ENCODE measurements at regions of chr5 and their contacts with region 1.

Region 1: DNA sequence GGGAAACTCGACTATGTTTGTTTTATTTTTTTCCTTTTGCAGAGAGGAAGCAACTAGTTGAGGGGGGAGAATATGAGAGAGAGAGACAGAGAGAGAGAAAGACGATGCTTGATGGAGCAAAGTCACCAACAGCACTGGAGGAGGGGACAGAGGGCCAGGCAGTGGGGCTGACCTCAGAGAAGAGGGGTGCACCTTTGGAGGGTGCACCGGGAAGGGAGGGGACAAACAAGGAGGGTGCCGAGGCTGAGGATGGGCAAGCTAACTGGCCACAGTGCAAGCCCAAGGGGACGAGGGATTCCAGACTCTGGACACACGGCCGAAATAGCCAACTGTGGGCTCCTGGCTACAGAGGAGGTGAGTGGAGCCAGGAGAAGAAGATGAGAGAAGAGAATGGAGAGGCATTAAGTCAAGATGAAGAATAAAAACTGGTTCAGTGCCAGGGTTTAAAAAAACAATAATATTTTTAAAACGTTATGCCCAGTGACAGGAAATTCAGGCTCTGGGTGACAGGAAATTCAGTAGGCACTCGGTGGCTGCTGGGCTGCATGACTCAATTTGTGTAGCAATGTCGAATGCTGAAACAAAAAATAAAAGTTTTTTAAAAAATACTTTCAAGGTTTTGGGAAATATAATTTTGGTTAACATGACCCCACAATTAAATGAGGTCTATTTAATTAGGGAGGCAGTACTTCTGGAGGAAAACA is 13.3 kb upstream of the GLRX start:
- DNase-seq: peak in 5 of 9 experiments; percentile 43 to 68 (median 50)
- ATAC-seq: peak; percentile 26
- H3K4me3 ChIP-seq: peak overlapping the region; percentile 80 to 94
- H3K4me3 Mint-ChIP-seq: peak overlapping the region; percentile 82
- H3K27ac ChIP-seq: peak overlapping the region; percentile 39 to 82
- H3K27ac Mint-ChIP-seq: peak overlapping the region; percentile 88
- H3K4me1 ChIP-seq: peaks cover 30% of the 10 kb centered on the region
- H3K4me1 Mint-ChIP-seq: peaks cover 52% of the 10 kb centered on the region
- H3K27me3 ChIP-seq: no peaks in the 10 kb centered on the region
- H3K27me3 Mint-ChIP-seq: no peaks in the 10 kb centered on the region
- CTCF ChIP-seq: no peak

Region 2: GRCh38 chr5:95808686-95809413 is 27.0 kb before region 1 on chr5:
- CTCF ChIA-PET with region 1: interaction called, 7 read pairs
- POLR2A ChIA-PET with region 1: interaction called, 12 read pairs
- intact Hi-C with region 1: loop called (anchors 1 to 5 kb)
- DNase-seq: peak; percentile 54 to 95 (median 79)
- ATAC-seq: peak; percentile 99
- H3K4me3 ChIP-seq: peak overlapping the region in 1 of 2 experiments; percentile 9
- H3K4me3 Mint-ChIP-seq: peak overlapping the region; percentile 70
- H3K27ac ChIP-seq: peak overlapping the region; percentile 5 to 61
- H3K27ac Mint-ChIP-seq: peak overlapping the region; percentile 80
- H3K4me1 ChIP-seq: peaks cover 60% of the 10 kb centered on the region
- H3K4me1 Mint-ChIP-seq: peaks cover 58% of the 10 kb centered on the region
- H3K27me3 ChIP-seq: no peaks in the 10 kb centered on the region
- H3K27me3 Mint-ChIP-seq: no peaks in the 10 kb centered on the region
- CTCF ChIP-seq: no peak

Region 3: GRCh38 chr5:95817440-95817839 is 18.4 kb before region 1 on chr5:
- CTCF ChIA-PET with region 1: interaction called, 32 read pairs
- POLR2A ChIA-PET with region 1: interaction called, 69 read pairs
- intact Hi-C with region 1: loop called (anchors 2 kb)
- DNase-seq: peak in 5 of 9 experiments; percentile 41 to 69 (median 52)
- ATAC-seq: peak; percentile 43
- H3K4me3 ChIP-seq: peak overlapping the region; percentile 41 to 53
- H3K4me3 Mint-ChIP-seq: peak overlapping the region; percentile 98
- H3K27ac ChIP-seq: peak overlapping the region; percentile 54 to 71
- H3K27ac Mint-ChIP-seq: peak overlapping the region; percentile 93
- H3K4me1 ChIP-seq: peaks cover 65% of the 10 kb centered on the region
- H3K4me1 Mint-ChIP-seq: peaks cover 74% of the 10 kb centered on the region
- H3K27me3 ChIP-seq: no peaks in the 10 kb centered on the region
- H3K27me3 Mint-ChIP-seq: no peaks in the 10 kb centered on the region
- CTCF ChIP-seq: no peak

Region 4: DNA sequence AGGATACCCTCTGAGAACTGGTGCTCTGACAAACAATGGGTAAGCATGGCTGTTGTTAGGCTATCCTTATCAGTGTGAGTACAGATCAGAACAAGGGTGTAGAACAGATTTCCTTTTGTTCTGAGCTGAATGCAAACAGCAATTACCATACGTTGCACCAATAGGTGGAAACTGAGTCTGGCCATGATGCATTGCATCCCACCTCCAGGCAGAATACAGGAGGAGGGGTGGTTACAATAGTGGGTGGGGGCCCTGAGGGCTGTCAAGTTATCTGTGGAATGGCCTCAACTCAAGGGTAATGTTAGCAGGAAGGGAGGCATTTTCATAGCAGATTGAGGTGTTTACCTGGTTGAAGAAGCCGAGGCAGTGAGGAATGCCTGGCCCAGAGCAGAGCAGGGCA is 40.9 kb after region 1 on chr5:
- CTCF ChIA-PET with region 1: no interaction called
- POLR2A ChIA-PET with region 1: no interaction called
- intact Hi-C with region 1: no loop called
- DNase-seq: no peak
- ATAC-seq: no peak
- H3K4me3 ChIP-seq: no peak overlapping the region
- H3K4me3 Mint-ChIP-seq: no peak overlapping the region
- H3K27ac ChIP-seq: no peak overlapping the region
- H3K27ac Mint-ChIP-seq: no peak overlapping the region
- H3K4me1 ChIP-seq: no peaks in the 10 kb centered on the region
- H3K4me1 Mint-ChIP-seq: no peaks in the 10 kb centered on the region
- H3K27me3 ChIP-seq: no peaks in the 10 kb centered on the region
- H3K27me3 Mint-ChIP-seq: peaks cover 3% of the 10 kb centered on the region
- CTCF ChIP-seq: no peak

Region 5: GRCh38 chr5:96427823-96428222 is 592.0 kb after region 1 on chr5:
- CTCF ChIA-PET with region 1: no interaction called
- POLR2A ChIA-PET with region 1: no interaction called
- intact Hi-C with region 1: no loop called
- DNase-seq: no peak
- ATAC-seq: no peak
- H3K4me3 ChIP-seq: no peak overlapping the region
- H3K4me3 Mint-ChIP-seq: no peak overlapping the region
- H3K27ac ChIP-seq: no peak overlapping the region
- H3K27ac Mint-ChIP-seq: no peak overlapping the region
- H3K4me1 ChIP-seq: no peaks in the 10 kb centered on the region
- H3K4me1 Mint-ChIP-seq: no peaks in the 10 kb centered on the region
- H3K27me3 ChIP-seq: peaks cover 10 to 18% of the 10 kb centered on the region in 2 experiments
- H3K27me3 Mint-ChIP-seq: peaks cover 31% of the 10 kb centered on the region
- CTCF ChIP-seq: no peak

Measured in CD8-positive, alpha-beta T cell (primary cell).